Activated CD4-positive, alpha-beta T cell treated with anti-CD3 and anti-CD28 coated beads for 36 hours (primary cell): ENCODE measurements at regions of chr3 and their contacts with region 1.

Region 1: GRCh38 chr3:184135149-184135910 is at the start of gene EIF2B5:
- DNase-seq: peak; percentile 93
- ATAC-seq: peak; percentile 90
- H3K4me3 Mint-ChIP-seq: peak within 1 kb of the TSS; percentile 97
- H3K27ac Mint-ChIP-seq: peak within 1 kb of the TSS; percentile 92
- H3K4me1 Mint-ChIP-seq: peaks cover 29% of the 10 kb centered on the region
- H3K27me3 Mint-ChIP-seq: no peaks in the 10 kb centered on the region
- total RNA-seq, gene EIF2B5: 46.4 to 60.6 TPM

Region 2: GRCh38 chr3:183895296-183895695 is 240.0 kb before region 1 on chr3:
- CTCF ChIA-PET with region 1: interaction called, 4 read pairs
- POLR2A ChIA-PET with region 1: no interaction called
- intact Hi-C with region 1: loop called (anchors 2 to 10 kb)
- DNase-seq: peak; percentile 38
- ATAC-seq: peak; percentile 59
- H3K4me3 Mint-ChIP-seq: no peak overlapping the region
- H3K27ac Mint-ChIP-seq: no peak overlapping the region
- H3K4me1 Mint-ChIP-seq: no peaks in the 10 kb centered on the region
- H3K27me3 Mint-ChIP-seq: peaks cover 7% of the 10 kb centered on the region

Region 3: GRCh38 chr3:184154885-184155643 is 19.7 kb after region 1 on chr3 and contains the start of gene DVL3:
- CTCF ChIA-PET with region 1: interaction called, 3 read pairs
- POLR2A ChIA-PET with region 1: interaction called, 5 read pairs
- intact Hi-C with region 1: loop called (anchors 1 to 2 kb)
- DNase-seq: peak; percentile 61
- ATAC-seq: peak; percentile 71
- H3K4me3 Mint-ChIP-seq: peak within 1 kb of the TSS; percentile 97
- H3K27ac Mint-ChIP-seq: peak within 1 kb of the TSS; percentile 80
- H3K4me1 Mint-ChIP-seq: peaks cover 23% of the 10 kb centered on the region
- H3K27me3 Mint-ChIP-seq: no peaks in the 10 kb centered on the region
- total RNA-seq, gene DVL3: 24.9 to 29.6 TPM